ENCODE measurements at regions of chr20 and their contacts with region 1.

Region 1: GRCh38 chr20:50179507-50180016 is 11.1 kb upstream of the CEBPB start:
- DNase-seq: no peak
- ATAC-seq: peak; percentile 27 to 49 (median 44)
- H3K4me3 ChIP-seq: no peak overlapping the region
- H3K27ac ChIP-seq: no peak overlapping the region
- H3K4me1 ChIP-seq: no peaks in the 10 kb centered on the region
- H3K27me3 ChIP-seq: no peaks in the 10 kb centered on the region
- CTCF ChIP-seq: peak in 2 of 4 donors; percentile 21 to 27

Region 2: DNA sequence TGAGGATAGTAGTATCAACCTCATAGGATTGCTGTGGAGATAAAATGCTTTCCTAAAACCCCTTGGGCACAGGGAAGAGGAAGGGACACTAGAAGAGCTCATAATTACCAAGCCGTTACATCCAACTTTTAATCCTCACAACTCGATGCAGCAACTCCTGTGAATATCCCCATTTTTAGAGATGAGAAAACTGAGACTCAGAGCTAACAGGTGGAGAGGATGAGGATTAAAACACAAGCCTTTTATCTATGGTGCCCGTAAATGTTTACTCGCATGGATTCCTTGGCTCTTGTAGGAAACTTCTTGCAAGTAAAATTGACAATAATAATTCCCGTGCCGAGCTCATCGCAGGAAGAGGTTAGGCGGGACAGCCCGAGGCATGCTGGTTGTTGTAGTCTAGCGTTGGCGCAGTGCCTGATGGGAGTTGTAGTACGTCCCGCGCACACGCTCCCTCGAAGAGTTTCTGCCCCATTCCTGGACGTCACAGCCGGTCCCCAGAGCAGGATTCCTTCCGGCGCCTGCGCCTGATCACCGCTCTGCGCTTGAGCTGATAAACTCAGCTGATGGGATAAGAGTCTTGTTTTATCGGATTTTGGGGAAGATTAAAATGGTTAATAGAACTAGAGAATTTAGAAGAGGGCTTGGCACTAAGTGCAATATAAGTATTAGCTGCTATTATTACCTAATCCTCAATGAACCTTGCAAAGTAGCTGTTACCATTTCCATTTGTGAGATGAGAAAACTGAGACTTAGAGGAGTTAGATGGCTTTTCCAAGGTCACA is 63.8 kb before region 1 on chr20:
- intact Hi-C with region 1: loop called in 1 of 3 experiments (anchors 5 kb)
- DNase-seq: peak; percentile 93 to 99 (median 95)
- ATAC-seq: peak; percentile 83 to 90 (median 87)
- H3K4me3 ChIP-seq: peak overlapping the region in 3 of 4 donors; percentile 7 to 46 (median 35)
- H3K27ac ChIP-seq: peak overlapping the region in 2 of 4 donors; percentile 51 to 55
- H3K4me1 ChIP-seq: peaks cover 11 to 29% (median 12%) of the 10 kb centered on the region in 3 donors
- H3K27me3 ChIP-seq: no peaks in the 10 kb centered on the region
- CTCF ChIP-seq: no peak

Region 3: GRCh38 chr20:50226093-50226974 is 46.8 kb after region 1 on chr20:
- intact Hi-C with region 1: no loop called
- DNase-seq: peak in 3 of 6 donors; percentile 25 to 54 (median 32)
- ATAC-seq: peak in 2 of 4 donors; percentile 18 to 38
- H3K4me3 ChIP-seq: no peak overlapping the region
- H3K27ac ChIP-seq: no peak overlapping the region
- H3K4me1 ChIP-seq: peaks cover 0 to 4% (median 0%) of the 10 kb centered on the region in 3 donors
- H3K27me3 ChIP-seq: no peaks in the 10 kb centered on the region
- CTCF ChIP-seq: no peak

Region 4: GRCh38 chr20:50575847-50576720 is 396.5 kb after region 1 on chr20:
- intact Hi-C with region 1: loop called in 1 of 3 experiments (anchors 5 kb)
- DNase-seq: peak in 1 of 6 donors; percentile 42
- ATAC-seq: peak in 3 of 4 donors; percentile 69 to 73 (median 70)
- H3K4me3 ChIP-seq: no peak overlapping the region
- H3K27ac ChIP-seq: no peak overlapping the region
- H3K4me1 ChIP-seq: peaks cover 0 to 3% (median 0%) of the 10 kb centered on the region in 3 donors
- H3K27me3 ChIP-seq: no peaks in the 10 kb centered on the region
- CTCF ChIP-seq: peak in 3 of 4 donors; percentile 22 to 26 (median 24)

Measured in pancreas (tissue), 10 donors.